ENCODE measurements at regions of chr3 and their contacts with region 1.

Region 1: GRCh38 chr3:71652781-71653413 is 69.4 kb upstream of the FOXP1 start:
- DNase-seq: peak; percentile 71
- H3K4me3 ChIP-seq: no peak overlapping the region
- H3K27ac ChIP-seq: no peak overlapping the region
- H3K4me1 ChIP-seq: peaks cover 5% of the 10 kb centered on the region
- H3K27me3 ChIP-seq: no peaks in the 10 kb centered on the region
- CTCF ChIP-seq: peak; percentile 56; the same call in 1 of the 2 replicates

Region 2: DNA sequence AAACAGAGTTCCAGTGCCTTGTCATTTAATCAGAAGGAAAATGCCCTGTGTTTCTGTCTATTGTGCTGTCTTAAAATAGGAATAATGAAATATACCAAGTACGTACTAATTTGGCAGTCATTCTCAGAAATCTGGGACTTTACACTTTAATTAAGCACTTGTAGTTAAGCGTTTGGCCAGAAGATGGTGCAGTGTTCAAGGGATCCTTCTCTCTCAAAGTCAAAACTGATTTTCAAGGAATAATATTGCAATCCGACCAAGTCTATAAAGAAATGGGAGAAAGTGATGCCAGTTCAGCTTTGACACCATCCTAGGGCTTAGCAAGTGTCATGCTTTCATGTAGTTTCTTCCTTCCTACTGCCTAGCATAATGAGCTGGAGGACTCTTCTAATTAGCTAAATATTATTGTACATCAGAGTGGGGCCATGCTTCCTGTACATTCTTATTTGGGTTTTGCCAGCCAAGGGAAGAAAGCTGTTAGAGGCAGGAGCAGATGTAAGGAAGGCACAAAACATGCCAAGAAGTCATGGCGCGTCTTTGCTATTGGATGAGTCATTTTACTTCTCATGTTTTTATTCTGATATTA is 1588.6 kb before region 1 on chr3:
- CTCF ChIA-PET with region 1: no interaction called
- POLR2A ChIA-PET with region 1: no interaction called
- intact Hi-C with region 1: loop called (anchors 2 kb)
- DNase-seq: peak; percentile 32
- H3K4me3 ChIP-seq: no peak overlapping the region
- H3K27ac ChIP-seq: no peak overlapping the region
- H3K4me1 ChIP-seq: no peaks in the 10 kb centered on the region
- H3K27me3 ChIP-seq: no peaks in the 10 kb centered on the region
- CTCF ChIP-seq: peak; percentile 52

Region 3: DNA sequence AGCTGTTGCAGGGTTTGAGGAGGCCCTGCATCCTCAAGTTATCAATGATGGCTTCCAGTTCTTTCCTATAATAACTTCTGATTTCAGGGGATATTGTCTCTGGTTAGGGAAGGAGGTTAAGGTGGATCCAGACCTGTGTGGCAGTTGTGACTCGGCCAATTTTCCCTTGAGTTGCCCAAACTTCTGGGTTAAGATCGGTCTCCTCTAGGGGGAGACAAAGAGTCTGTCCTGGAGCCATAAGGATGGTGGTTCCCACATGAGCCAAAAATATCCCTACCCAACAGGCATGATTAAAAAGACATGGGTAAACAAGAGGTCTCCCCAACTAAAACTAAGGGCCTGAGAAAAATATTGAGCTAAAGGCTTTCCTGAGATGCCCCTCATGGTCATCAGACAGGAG is 1113.0 kb before region 1 on chr3:
- CTCF ChIA-PET with region 1: interaction called, 3 read pairs
- POLR2A ChIA-PET with region 1: no interaction called
- intact Hi-C with region 1: loop called (anchors 10 kb)
- DNase-seq: peak; percentile 8
- H3K4me3 ChIP-seq: no peak overlapping the region
- H3K27ac ChIP-seq: no peak overlapping the region
- H3K4me1 ChIP-seq: no peaks in the 10 kb centered on the region
- H3K27me3 ChIP-seq: no peaks in the 10 kb centered on the region
- CTCF ChIP-seq: peak; percentile 39; the same call in 1 of the 2 replicates

Region 4: GRCh38 chr3:71725279-71725991 is 72.5 kb after region 1 on chr3 and contains the start of gene EIF4E3:
- CTCF ChIA-PET with region 1: no interaction called
- POLR2A ChIA-PET with region 1: no interaction called
- intact Hi-C with region 1: no loop called
- DNase-seq: no peak
- H3K4me3 ChIP-seq: peak within 1 kb of the TSS; percentile 54
- H3K27ac ChIP-seq: no peak within 1 kb of the TSS
- H3K4me1 ChIP-seq: no peaks in the 10 kb centered on the region
- H3K27me3 ChIP-seq: no peaks in the 10 kb centered on the region
- CTCF ChIP-seq: no peak
- total RNA-seq, gene EIF4E3: 3.1 and 4.6 TPM in 2 replicates